Thyroid gland (tissue), 4 donors: ENCODE measurements at regions of chr19 and their contacts with region 1.

Region 1: DNA sequence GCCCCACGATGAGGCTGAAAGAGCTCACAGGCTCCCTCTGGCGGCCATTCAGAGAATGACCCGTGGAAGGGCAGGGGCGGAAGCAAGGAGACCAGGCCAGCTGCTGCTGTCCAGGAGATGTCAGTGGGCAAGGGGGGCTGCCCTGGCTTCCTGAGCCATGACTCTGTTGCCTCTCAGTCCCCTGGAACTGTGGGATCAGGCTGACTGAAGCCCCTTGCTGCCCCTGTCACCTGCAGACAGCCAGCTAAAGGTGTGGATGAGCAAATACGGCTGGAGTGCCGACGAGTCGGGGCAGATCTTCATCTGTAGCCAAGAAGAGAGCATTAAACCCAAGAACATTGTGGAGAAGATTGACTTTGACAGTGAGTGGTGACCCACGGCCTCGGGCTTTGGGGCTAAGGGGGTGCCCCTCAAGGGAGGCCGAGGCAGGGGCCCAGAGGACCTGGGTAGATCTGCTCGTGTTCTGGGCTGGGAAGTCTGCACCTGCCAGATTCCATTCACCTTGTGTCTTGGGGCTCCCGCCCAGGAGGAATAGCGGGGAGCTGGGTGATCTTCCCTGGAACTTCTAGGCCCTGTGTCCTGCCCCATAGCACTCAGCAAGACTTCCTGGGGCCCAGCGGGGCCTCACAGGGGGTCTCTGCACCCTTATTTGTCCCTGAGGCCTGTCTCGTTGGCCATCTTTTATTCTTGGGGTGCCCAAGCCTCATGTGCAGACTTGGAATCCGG is 12.5 kb upstream of the ACTN4 start:
- DNase-seq: peak; percentile 63 to 73
- H3K4me3 ChIP-seq: no peak overlapping the region
- H3K27ac ChIP-seq: peak overlapping the region in 1 of 3 donors; percentile 21
- H3K4me1 ChIP-seq: peaks cover 0 to 10% of the 10 kb centered on the region in 2 donors
- H3K27me3 ChIP-seq: no peaks in the 10 kb centered on the region
- CTCF ChIP-seq: peak; percentile 75 to 95 (median 90)
- POLR2A ChIP-seq: no peak

Region 2: GRCh38 chr19:38402967-38403861 is 231.7 kb before region 1 on chr19 and contains the start of gene FAM98C:
- intact Hi-C with region 1: loop called (anchors 2 kb)
- DNase-seq: peak; percentile 96
- H3K4me3 ChIP-seq: peak within 1 kb of the TSS; percentile 68 to 99 (median 86)
- H3K27ac ChIP-seq: peak within 1 kb of the TSS; percentile 56 to 86 (median 72)
- H3K4me1 ChIP-seq: peaks cover 5 to 7% of the 10 kb centered on the region in 2 donors
- H3K27me3 ChIP-seq: no peaks in the 10 kb centered on the region
- CTCF ChIP-seq: peak; percentile 73 to 99 (median 98)
- POLR2A ChIP-seq: peak in 1 of 2 donors; percentile 67
- total RNA-seq, gene FAM98C: 22.1 to 36.5 (median 23.9) TPM

Region 3: DNA sequence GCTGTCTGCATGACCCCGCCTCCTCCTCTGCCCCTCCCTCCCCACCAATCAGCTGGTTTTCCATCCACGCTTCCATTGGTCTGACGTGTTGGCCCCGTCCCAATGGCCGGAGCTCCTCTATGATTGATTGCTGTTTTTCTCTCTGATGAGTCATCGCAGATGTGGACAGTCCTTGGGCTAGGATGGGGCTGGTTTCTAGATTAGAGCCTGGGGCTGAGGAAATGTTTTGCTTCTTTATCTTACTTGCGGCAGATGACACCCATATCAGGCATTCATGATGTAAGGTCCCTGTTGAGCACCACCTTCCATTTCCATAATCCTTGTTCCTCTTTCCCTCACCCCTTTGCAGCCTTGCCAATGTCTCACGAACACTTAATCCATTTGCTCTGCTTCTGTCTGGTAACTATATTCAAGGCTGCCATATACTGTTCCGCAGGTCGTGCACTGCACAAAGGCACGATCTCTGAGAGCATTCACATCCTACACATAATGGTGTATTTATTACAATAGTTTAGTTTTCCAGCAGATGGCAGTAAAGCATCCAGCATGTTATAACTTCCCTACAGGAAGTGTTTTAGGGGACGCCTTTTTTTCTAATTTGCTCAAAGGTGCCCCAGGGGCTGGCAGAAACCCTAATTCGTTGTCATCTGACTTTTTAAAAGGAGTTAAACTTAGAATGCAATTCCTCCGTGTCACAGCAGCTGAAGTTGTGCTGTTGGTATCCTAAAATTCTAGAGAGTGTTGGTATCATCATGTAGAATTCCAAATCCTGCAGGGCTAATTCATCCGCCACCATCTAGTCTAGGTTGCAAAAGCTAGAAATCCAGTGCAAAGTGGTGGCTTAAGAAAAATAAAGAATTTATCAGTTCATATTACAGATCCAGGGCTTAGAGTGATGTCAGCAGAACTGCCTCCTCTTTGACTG is 90.6 kb before region 1 on chr19:
- intact Hi-C with region 1: loop called (anchors 10 kb)
- DNase-seq: peak; percentile 18 to 30
- H3K4me3 ChIP-seq: no peak overlapping the region
- H3K27ac ChIP-seq: no peak overlapping the region
- H3K4me1 ChIP-seq: no peaks in the 10 kb centered on the region
- H3K27me3 ChIP-seq: no peaks in the 10 kb centered on the region
- CTCF ChIP-seq: peak in 5 of 6 experiments; percentile 16 to 70 (median 54)
- POLR2A ChIP-seq: no peak

Region 4: DNA sequence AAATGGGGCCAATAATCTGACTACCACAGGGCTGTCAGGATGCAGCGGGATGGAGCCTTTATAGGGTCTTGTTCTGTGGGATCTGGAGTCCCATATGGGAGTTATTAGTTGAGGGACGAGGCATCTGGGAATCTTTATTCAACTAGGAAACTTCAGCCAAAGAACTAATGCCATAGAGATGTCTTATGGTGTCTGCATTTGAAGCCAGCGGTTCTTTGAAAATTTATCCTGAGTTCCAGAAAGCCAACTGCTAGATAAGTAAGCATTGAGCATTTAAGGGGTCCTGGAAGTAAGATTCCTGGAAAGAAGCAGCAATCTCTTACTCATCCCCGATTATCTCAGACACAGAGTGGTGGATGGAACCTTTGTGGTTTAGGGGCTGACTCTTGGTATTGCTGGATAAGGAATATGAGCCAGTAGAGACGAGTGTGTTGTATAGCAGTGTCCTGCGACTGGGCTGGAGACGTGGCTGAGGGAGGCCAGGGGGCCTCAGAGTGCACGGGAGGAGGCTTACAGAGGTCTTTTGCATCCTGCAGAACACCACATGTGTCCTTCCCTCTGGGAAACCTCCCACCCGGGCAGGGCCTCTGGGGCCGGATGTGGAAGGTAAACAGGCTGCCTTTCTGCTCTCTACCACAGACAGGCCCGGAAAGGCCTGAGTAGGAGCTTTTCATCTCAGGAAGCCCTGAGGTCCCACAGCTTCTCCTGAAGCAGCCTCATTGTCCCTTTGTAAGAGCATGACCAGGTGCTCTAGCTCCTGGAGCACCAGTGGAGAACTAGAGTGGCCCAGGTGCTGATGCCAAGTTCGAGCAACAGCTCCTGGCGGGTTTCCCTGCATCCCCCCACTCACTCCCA is 41.3 kb after region 1 on chr19:
- intact Hi-C with region 1: no loop called
- DNase-seq: no peak
- H3K4me3 ChIP-seq: no peak overlapping the region
- H3K27ac ChIP-seq: peak overlapping the region; percentile 60 to 78 (median 64)
- H3K4me1 ChIP-seq: peaks cover 31 to 71% of the 10 kb centered on the region in 2 donors
- H3K27me3 ChIP-seq: no peaks in the 10 kb centered on the region
- CTCF ChIP-seq: no peak
- POLR2A ChIP-seq: no peak

Region 5: GRCh38 chr19:38912600-38913514 is 277.9 kb after region 1 on chr19:
- intact Hi-C with region 1: no loop called
- DNase-seq: no peak
- H3K4me3 ChIP-seq: no peak overlapping the region
- H3K27ac ChIP-seq: no peak overlapping the region
- H3K4me1 ChIP-seq: no peaks in the 10 kb centered on the region
- H3K27me3 ChIP-seq: no peaks in the 10 kb centered on the region
- CTCF ChIP-seq: no peak
- POLR2A ChIP-seq: no peak

Region 6: GRCh38 chr19:38929929-38930775 is 295.2 kb after region 1 on chr19 and contains the start of gene SARS2:
- intact Hi-C with region 1: loop called (anchors 10 kb)
- DNase-seq: peak; percentile 94
- H3K4me3 ChIP-seq: peak within 1 kb of the TSS; percentile 9 to 68 (median 42)
- H3K27ac ChIP-seq: peak within 1 kb of the TSS; percentile 59 to 86 (median 76)
- H3K4me1 ChIP-seq: peaks cover 0 to 17% of the 10 kb centered on the region in 2 donors
- H3K27me3 ChIP-seq: no peaks in the 10 kb centered on the region
- CTCF ChIP-seq: peak; percentile 85 to 99 (median 98)
- POLR2A ChIP-seq: peak in 1 of 2 donors; percentile 51
- total RNA-seq, gene SARS2: 26.6 to 52.0 (median 37.8) TPM

Region 7: DNA sequence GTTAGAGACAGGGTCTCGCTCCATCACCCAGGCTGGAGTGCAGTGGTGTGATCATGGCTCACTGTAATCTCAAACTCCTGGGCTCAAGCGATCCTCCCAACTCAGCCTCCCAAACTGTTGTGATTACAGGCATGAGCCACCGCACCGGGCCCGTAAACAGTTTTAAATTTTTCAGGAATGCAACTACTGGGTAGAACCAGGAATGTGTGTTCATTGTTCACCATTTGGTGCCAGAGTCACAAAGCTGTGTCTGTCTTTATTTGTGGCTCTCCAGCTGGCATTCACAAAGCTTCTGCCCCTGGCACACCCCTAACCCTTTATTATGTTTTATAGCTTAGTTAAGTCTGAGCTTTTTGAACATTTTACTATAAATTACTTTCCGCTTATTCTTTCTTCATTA is 429.5 kb after region 1 on chr19:
- intact Hi-C with region 1: no loop called
- DNase-seq: no peak
- H3K4me3 ChIP-seq: no peak overlapping the region
- H3K27ac ChIP-seq: no peak overlapping the region
- H3K4me1 ChIP-seq: no peaks in the 10 kb centered on the region
- H3K27me3 ChIP-seq: no peaks in the 10 kb centered on the region
- CTCF ChIP-seq: no peak
- POLR2A ChIP-seq: no peak